ENCODE measurements at regions of chr11 and their contacts with region 1.

Region 1: DNA sequence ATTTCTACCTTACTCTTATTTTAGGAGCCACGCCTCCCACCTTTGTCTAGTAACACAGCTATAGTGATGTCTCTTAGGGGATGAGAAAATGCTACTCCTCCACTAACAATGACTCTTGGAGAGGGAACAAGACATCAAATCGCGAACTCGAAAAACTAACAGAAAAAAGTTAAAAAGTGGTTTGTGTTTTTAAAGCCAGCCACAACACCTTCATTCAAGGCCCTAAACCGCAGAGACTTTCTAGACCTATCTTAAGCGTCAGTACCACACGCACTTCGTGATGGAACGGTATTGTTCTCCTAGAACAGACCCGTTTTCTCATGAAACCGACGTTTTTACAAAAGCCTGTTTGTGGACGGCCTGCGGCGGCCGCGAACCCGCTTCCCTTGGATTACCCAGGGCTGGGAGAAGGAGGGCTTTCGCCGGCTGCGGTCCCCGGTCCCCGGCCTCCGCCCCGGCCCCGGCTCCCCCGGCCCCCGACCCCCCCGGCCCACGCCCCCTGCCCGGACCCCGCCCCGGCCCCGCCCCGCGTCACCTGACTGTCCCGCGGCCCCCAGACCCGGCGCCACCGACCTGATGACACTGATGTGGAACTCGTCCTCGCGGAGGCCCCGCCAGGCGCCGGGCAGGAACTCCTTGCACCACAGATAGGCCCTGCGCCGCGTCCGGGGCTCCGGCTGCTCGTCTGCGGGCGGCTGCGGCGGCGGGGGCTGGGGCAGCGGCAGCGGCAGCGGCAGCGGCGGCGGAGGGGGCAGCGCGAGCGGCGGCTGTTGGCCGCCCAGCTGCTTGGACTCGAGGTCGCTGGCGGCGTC is 727 bp downstream of the CHKA start:
- DNase-seq: peak; percentile 52 to 73 (median 70)
- ATAC-seq: peak; percentile 3; the same call in 2 of the 3 replicates
- H3K4me3 ChIP-seq: peak overlapping the region; percentile 63
- H3K27ac ChIP-seq: peak overlapping the region; percentile 88
- H3K4me1 ChIP-seq: peaks cover 23 to 38% of the 10 kb centered on the region in 2 experiments
- H3K27me3 ChIP-seq: no peaks in the 10 kb centered on the region
- CTCF ChIP-seq: no peak
- EP300 ChIP-seq: no peak
- POLR2A ChIP-seq: no peak
- RAD21 ChIP-seq: no peak

Region 2: GRCh38 chr11:68099474-68100405 is 20.7 kb before region 1 on chr11:
- CTCF ChIA-PET with region 1: no interaction called
- POLR2A ChIA-PET with region 1: interaction called, 22 read pairs
- in situ Hi-C with region 1: no loop called
- intact Hi-C with region 1: no loop called
- DNase-seq: peak in 3 of 4 experiments; percentile 33 to 91 (median 74)
- ATAC-seq: peak; percentile 95
- H3K4me3 ChIP-seq: peak overlapping the region; percentile 15; the same call in 1 of the 2 replicates
- H3K27ac ChIP-seq: peak overlapping the region; percentile 57
- H3K4me1 ChIP-seq: peaks cover 4 to 12% of the 10 kb centered on the region in 2 experiments; a peak in 3 of 5 replicates
- H3K27me3 ChIP-seq: no peaks in the 10 kb centered on the region
- CTCF ChIP-seq: no peak
- EP300 ChIP-seq: peak; percentile 47; the same call in 1 of the 2 replicates
- POLR2A ChIP-seq: no peak
- RAD21 ChIP-seq: no peak

Region 3: DNA sequence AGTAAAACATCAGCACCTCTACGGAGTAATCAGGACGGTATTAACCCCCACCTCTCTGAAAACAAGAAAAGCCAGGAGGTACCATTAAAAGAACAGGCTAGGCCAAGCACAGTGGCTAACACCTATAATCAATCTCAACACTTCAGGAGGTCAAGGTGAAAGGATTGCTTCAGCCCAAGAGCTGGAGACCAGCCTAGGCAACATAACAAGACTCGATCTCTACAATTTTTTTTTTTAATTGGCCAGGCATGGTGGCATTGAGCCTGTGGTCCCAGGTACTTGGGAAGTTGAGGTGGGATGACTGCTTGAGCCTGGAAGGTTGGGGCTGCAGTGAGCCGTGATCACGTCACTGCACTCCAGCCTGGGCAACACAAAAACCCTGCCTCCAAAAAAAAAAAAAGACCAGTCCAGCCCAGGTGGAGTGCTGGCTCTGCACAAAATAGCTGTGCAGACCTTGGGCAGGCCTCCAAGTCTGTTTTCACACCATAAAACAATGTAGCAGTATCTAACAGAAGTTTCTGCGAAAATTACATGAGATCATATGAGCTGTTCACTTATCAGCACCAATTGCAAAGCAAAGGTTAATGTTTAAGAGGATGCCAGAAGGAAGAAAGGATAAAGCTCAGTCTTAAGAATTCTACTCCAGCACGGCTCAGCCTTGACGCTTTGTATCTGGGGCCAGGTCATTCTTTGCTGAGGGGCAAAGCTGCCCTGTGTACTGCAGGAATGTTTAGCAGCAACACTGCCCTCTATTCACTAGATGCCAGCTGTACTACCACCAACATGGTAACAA is 14.1 kb before region 1 on chr11:
- CTCF ChIA-PET with region 1: no interaction called
- POLR2A ChIA-PET with region 1: interaction called, 31 read pairs
- in situ Hi-C with region 1: no loop called
- intact Hi-C with region 1: no loop called
- DNase-seq: peak in 1 of 4 experiments; percentile 37
- ATAC-seq: peak; percentile 63
- H3K4me3 ChIP-seq: no peak overlapping the region
- H3K27ac ChIP-seq: 0 out of 3 replicates have a peak overlapping the region, but pooled peaks have one; percentile 21
- H3K4me1 ChIP-seq: peaks cover 4 to 16% of the 10 kb centered on the region in 2 experiments; a peak in 4 of 5 replicates
- H3K27me3 ChIP-seq: no peaks in the 10 kb centered on the region
- CTCF ChIP-seq: no peak
- EP300 ChIP-seq: no peak
- POLR2A ChIP-seq: no peak
- RAD21 ChIP-seq: no peak

Region 4: DNA sequence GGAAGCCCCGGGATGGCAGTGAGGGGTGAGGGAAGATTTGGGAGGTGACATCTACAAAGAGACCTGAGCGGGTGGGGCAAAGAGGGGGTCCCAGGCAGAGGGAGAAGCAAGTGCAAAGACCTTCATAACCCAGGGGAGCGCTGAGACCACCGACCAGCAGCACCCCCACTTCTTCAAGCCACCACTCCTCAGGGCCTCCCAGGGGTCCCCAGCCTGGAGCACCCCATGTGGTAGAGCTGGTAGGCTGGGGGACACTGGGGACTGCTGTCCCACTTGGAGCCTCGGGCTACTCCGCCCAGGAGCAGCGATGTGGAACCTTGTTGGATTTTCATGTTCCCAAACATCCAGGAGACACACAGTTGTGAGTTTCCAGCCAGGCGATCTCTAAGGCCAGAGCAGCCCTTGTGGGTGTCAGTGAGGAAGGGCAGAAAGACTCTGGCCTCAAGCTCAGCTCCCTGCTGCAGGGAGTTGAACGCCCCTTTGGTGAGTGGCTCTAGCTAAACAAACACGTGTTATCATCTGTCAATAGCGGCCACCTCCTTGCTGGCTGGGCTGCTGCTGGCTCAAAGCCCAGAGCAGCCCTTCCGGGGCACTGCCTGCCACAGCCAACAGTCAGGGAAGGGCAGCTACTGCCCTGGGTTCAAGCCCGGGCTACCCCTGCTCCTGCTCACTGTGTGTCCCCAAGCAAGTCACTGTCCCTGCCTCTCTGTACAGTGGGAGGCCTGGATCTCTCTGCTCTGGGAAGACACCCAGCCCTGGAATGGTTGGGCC is 26.4 kb after region 1 on chr11:
- CTCF ChIA-PET with region 1: no interaction called
- POLR2A ChIA-PET with region 1: interaction called, 12 read pairs
- in situ Hi-C with region 1: no loop called
- intact Hi-C with region 1: no loop called
- DNase-seq: peak; percentile 80 to 81 (median 80)
- ATAC-seq: peak; percentile 84
- H3K4me3 ChIP-seq: no peak overlapping the region
- H3K27ac ChIP-seq: peak overlapping the region; percentile 43; the same call in 1 of the 3 replicates
- H3K4me1 ChIP-seq: peaks cover 20 to 41% of the 10 kb centered on the region in 2 experiments
- H3K27me3 ChIP-seq: no peaks in the 10 kb centered on the region
- CTCF ChIP-seq: no peak
- EP300 ChIP-seq: no peak
- POLR2A ChIP-seq: 0 out of 2 replicates have a peak, but pooled peaks have one; percentile 21
- RAD21 ChIP-seq: no peak